GM12878 (cell line): ENCODE measurements at regions of chr20 and their contacts with region 1.

Region 1: GRCh38 chr20:3045816-3046676 is at the start of gene MRPS26:
- DNase-seq: no peak
- ATAC-seq: peak; percentile 97
- H3K4me3 ChIP-seq: peak within 1 kb of the TSS; percentile 80
- H3K27ac ChIP-seq: peak within 1 kb of the TSS; percentile 87
- H3K4me1 ChIP-seq: no peaks in the 10 kb centered on the region; the same call in 1 of the 2 replicates
- H3K27me3 ChIP-seq: no peaks in the 10 kb centered on the region
- CTCF ChIP-seq: no peak
- EP300 ChIP-seq: no peak
- POLR2A ChIP-seq: peak; percentile 81
- RAD21 ChIP-seq: no peak
- polyA plus RNA-seq, gene MRPS26: 3.9 to 9.3 TPM

Region 2: DNA sequence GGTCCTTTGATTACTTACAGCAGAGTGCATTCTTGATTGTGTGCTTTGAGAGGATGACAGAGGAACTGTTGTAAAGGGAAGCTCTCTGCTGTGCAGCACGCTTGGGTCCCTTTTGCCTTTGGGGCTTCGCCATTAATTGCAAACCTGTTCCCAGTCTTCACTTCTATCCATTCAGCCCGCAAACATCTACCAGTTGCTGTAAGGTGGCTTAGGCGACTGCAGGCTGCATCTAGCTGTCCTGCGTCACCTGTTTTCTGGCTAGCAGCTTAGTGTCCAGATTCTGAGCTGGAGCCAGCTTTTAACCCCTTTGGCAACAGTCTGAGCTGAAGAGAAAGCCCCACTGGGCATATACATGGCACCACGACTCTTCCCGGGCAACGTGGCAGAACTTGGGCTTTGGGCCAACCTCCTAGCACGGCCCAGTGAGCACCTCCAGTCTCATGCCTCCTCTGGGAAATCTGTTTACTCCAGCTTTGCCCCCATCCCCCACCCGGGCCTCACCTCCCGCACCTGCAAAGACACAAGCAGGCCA is 116.1 kb after region 1 on chr20:
- CTCF ChIA-PET with region 1: no interaction called
- POLR2A ChIA-PET with region 1: interaction called, 13 read pairs
- RAD21 ChIA-PET with region 1: interaction called, 5 read pairs
- SMC1A ChIA-PET with region 1: no interaction called
- in situ Hi-C with region 1: no loop called
- intact Hi-C with region 1: no loop called
- DNase-seq: no peak
- ATAC-seq: no peak
- H3K4me3 ChIP-seq: no peak overlapping the region
- H3K27ac ChIP-seq: no peak overlapping the region
- H3K4me1 ChIP-seq: peaks cover 4% of the 10 kb centered on the region
- H3K27me3 ChIP-seq: no peaks in the 10 kb centered on the region; a peak in 2 of 4 replicates
- CTCF ChIP-seq: no peak
- EP300 ChIP-seq: no peak
- POLR2A ChIP-seq: no peak
- RAD21 ChIP-seq: no peak

Region 3: GRCh38 chr20:3204124-3204822 is 158.2 kb after region 1 on chr20 and contains the start of gene DDRGK1:
- CTCF ChIA-PET with region 1: no interaction called
- POLR2A ChIA-PET with region 1: no interaction called
- RAD21 ChIA-PET with region 1: no interaction called
- SMC1A ChIA-PET with region 1: interaction called, 3 read pairs
- in situ Hi-C with region 1: no loop called
- intact Hi-C with region 1: loop called (anchors 10 kb)
- DNase-seq: peak; percentile 65
- ATAC-seq: peak; percentile 90
- H3K4me3 ChIP-seq: peak within 1 kb of the TSS; percentile 89
- H3K27ac ChIP-seq: peak within 1 kb of the TSS; percentile 90
- H3K4me1 ChIP-seq: peaks cover 4% of the 10 kb centered on the region
- H3K27me3 ChIP-seq: no peaks in the 10 kb centered on the region
- CTCF ChIP-seq: no peak
- EP300 ChIP-seq: no peak
- POLR2A ChIP-seq: peak; percentile 87
- RAD21 ChIP-seq: no peak
- polyA plus RNA-seq, gene DDRGK1: 4.0 to 8.9 TPM

Region 4: DNA sequence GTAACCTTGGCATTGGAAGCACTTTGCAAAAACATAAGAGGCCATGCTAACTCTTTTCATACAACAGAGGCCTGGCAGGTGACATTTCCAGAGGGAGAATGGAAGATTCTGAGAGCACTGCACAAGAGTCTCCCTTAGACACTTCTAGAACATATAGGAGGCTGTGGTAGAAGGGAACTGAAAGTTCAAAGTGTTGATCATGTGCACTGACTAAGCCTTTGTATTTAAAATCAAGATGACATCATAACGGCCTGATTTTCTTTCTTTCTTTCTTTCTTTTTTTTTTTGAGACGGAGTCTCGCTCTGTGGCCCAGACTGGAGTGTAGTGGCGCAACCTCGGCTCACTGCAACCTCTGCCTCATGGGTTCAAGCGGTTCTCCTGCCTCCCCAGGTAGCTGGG is 388.2 kb after region 1 on chr20:
- CTCF ChIA-PET with region 1: no interaction called
- POLR2A ChIA-PET with region 1: no interaction called
- RAD21 ChIA-PET with region 1: no interaction called
- SMC1A ChIA-PET with region 1: no interaction called
- in situ Hi-C with region 1: no loop called
- intact Hi-C with region 1: no loop called
- DNase-seq: no peak
- ATAC-seq: peak; percentile 59; the same call in 2 of the 3 replicates
- H3K4me3 ChIP-seq: no peak overlapping the region
- H3K27ac ChIP-seq: no peak overlapping the region
- H3K4me1 ChIP-seq: peaks cover 7% of the 10 kb centered on the region
- H3K27me3 ChIP-seq: no peaks in the 10 kb centered on the region
- CTCF ChIP-seq: no peak
- EP300 ChIP-seq: no peak
- POLR2A ChIP-seq: no peak
- RAD21 ChIP-seq: no peak